Activated naive CD4-positive, alpha-beta T cell treated with anti-CD3 and anti-CD28 coated beads for 36 hours (primary cell): ENCODE measurements at regions of chr3 and their contacts with region 1.

Region 1: GRCh38 chr3:128497387-128498126 is 4.6 kb upstream of the GATA2 start:
- DNase-seq: peak; percentile 74
- H3K4me3 Mint-ChIP-seq: peak overlapping the region; percentile 68
- H3K27ac Mint-ChIP-seq: no peak overlapping the region
- H3K4me1 Mint-ChIP-seq: peaks cover 3% of the 10 kb centered on the region
- H3K27me3 Mint-ChIP-seq: peaks cover 49% of the 10 kb centered on the region

Region 2: GRCh38 chr3:128584412-128585020 is 87.0 kb after region 1 on chr3:
- CTCF ChIA-PET with region 1: interaction called, 8 read pairs
- intact Hi-C with region 1: loop called (anchors 2 kb)
- DNase-seq: peak; percentile 76
- H3K4me3 Mint-ChIP-seq: no peak overlapping the region
- H3K27ac Mint-ChIP-seq: no peak overlapping the region
- H3K4me1 Mint-ChIP-seq: no peaks in the 10 kb centered on the region
- H3K27me3 Mint-ChIP-seq: no peaks in the 10 kb centered on the region